ENCODE measurements at regions of chr3 and their contacts with region 1.

Region 1: GRCh38 chr3:69161587-69162307 is 39.4 kb upstream of the LMOD3 start:
- DNase-seq: no peak
- ATAC-seq: peak; percentile 67

Region 2: GRCh38 chr3:69306239-69307185 is 144.8 kb after region 1 on chr3:
- intact Hi-C with region 1: loop called (anchors 5 kb)
- DNase-seq: peak; percentile 58
- ATAC-seq: peak; percentile 94

Region 3: GRCh38 chr3:69420781-69421520 is 259.2 kb after region 1 on chr3:
- intact Hi-C with region 1: loop called (anchors 5 kb)
- DNase-seq: peak; percentile 43
- ATAC-seq: peak; percentile 83

Region 4: DNA sequence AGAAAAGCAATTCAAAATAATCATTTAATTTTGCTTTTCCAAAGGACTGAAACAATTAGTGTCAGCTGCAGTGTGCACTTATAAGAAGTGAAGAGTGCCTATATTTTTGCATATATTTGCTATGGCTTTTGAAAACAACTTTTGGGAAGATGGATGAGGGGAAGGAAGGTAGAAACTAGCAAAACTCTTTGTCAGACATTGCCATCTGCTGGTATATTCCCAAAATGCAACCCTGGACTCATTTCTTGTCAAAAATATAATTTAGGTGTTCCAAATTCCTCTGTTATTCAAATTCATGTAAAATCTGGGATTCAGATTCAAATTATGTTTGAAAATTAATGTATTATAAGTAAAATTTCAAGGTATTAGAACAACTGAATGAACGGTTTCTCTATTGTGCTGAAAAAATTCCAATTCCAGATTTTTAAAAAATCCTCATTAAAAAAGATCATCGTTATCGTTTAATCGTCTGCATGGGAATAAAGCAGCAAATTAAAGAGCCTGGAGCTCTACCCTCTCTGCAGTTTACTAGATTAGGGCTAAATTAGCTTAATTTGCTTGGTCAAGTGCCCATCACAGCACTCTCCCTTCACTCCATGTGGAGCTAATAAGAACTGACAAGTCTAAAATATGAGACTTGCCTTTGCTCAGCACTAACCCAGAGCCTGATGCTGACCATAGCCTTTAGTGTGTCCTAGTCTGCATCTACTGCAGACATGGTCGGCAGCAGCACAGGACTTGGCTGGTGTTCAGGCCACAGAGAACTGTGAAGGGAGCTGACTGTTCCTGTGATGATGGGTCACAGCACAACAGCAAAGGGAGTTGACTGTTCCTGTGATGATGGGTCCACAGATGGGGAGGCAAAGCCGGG is 509.6 kb after region 1 on chr3:
- intact Hi-C with region 1: loop called (anchors 5 kb)
- DNase-seq: no peak
- ATAC-seq: peak; percentile 78